ENCODE measurements at regions of chr11 and their contacts with region 1.

Region 1: DNA sequence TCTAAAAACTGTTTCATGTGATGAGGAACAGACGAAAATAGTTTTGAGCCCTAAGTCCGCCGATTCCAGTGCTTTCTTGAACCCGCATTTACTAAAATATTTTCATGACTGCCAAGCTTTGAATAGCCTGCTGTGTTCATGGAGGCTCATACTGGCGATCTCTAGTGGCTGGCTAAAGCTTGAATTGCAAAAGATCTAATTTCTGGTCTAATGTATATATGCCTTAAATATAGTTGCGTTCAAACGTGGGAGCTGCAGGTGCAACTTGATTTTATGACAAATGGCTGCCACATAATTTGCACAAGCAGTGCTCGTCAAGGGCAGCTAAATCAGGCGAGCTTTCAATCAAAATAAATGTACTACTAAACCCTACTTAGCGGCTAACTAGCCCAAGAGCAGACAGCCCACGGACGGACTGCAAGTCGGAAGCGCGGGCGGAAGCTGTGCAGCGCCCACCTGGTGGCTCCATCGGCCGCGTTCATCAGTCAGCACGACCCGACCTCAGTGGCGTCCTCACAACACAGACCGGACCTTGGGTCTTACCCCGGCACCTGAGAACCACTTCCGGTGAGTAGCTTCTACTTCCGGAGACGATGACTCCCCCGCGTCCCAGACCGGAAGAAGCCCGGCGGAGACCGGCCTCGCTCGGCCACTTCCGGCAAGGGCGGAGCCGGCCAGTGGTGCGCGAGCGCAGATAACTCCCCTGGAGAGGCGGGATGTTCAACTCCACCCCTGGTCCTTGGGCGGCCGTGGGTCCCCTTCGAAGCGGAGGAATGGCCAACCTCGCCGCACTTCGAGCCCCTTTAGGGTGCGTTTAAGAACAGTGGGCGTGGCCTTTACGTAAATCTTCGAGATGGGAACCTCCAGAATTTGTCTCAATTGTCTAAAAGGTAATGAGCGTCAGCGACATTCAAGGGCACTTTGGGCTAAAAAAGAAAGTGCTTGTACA is 6.1 kb downstream of the RPL27A start:
- DNase-seq: peak; percentile 97 to 99
- H3K4me3 ChIP-seq: peak overlapping the region; percentile 54
- H3K4me3 Mint-ChIP-seq: peak overlapping the region; percentile 67
- H3K27ac Mint-ChIP-seq: peak overlapping the region; percentile 7
- H3K4me1 ChIP-seq: peaks cover 35% of the 10 kb centered on the region
- H3K4me1 Mint-ChIP-seq: peaks cover 34% of the 10 kb centered on the region
- H3K27me3 ChIP-seq: no peaks in the 10 kb centered on the region
- H3K27me3 Mint-ChIP-seq: no peaks in the 10 kb centered on the region
- CTCF ChIP-seq: peak in 1 of 2 experiments; percentile 62

Region 2: GRCh38 chr11:8768625-8769333 is 80.1 kb after region 1 on chr11:
- CTCF ChIA-PET with region 1: interaction called, 17 read pairs
- POLR2A ChIA-PET with region 1: interaction called, 5 read pairs
- intact Hi-C with region 1: loop called (anchors 1 kb)
- DNase-seq: peak; percentile 43 to 55
- H3K4me3 ChIP-seq: no peak overlapping the region
- H3K4me3 Mint-ChIP-seq: no peak overlapping the region
- H3K27ac Mint-ChIP-seq: no peak overlapping the region
- H3K4me1 ChIP-seq: peaks cover 14% of the 10 kb centered on the region; the same call in 1 of the 2 replicates
- H3K4me1 Mint-ChIP-seq: peaks cover 12% of the 10 kb centered on the region
- H3K27me3 ChIP-seq: no peaks in the 10 kb centered on the region
- H3K27me3 Mint-ChIP-seq: no peaks in the 10 kb centered on the region
- CTCF ChIP-seq: peak in 1 of 2 experiments; percentile 60

Region 3: GRCh38 chr11:8794677-8795103 is 106.0 kb after region 1 on chr11:
- CTCF ChIA-PET with region 1: interaction called, 6 read pairs
- POLR2A ChIA-PET with region 1: no interaction called
- intact Hi-C with region 1: loop called (anchors 1 kb)
- DNase-seq: peak; percentile 86 to 89
- H3K4me3 ChIP-seq: peak overlapping the region; percentile 33
- H3K4me3 Mint-ChIP-seq: peak overlapping the region; percentile 68
- H3K27ac Mint-ChIP-seq: peak overlapping the region; percentile 83
- H3K4me1 ChIP-seq: peaks cover 31% of the 10 kb centered on the region
- H3K4me1 Mint-ChIP-seq: peaks cover 38% of the 10 kb centered on the region
- H3K27me3 ChIP-seq: no peaks in the 10 kb centered on the region
- H3K27me3 Mint-ChIP-seq: no peaks in the 10 kb centered on the region
- CTCF ChIP-seq: peak; percentile 82 to 94

Region 4: DNA sequence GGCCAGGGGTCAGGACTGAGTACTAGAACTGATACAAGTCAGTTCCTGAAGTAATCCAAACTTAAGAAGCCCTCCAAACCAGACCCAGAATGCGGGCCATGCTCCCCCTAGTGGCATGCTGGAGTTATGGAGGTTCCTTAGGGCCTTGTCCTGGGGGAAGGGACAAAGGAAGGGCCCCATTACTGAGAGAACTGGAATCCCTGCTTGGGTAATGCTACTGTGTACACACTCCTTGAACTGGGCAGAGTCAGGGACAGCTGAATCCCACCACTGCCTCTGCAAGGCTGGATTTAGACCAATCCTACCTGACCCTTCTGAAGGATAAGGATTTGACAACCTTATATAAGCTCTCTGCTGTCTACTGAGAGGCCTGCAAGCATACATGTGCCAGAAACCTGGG is 125.0 kb after region 1 on chr11:
- CTCF ChIA-PET with region 1: interaction called, 3 read pairs
- POLR2A ChIA-PET with region 1: interaction called, 6 read pairs
- intact Hi-C with region 1: loop called (anchors 1 kb)
- DNase-seq: peak; percentile 88
- H3K4me3 ChIP-seq: no peak overlapping the region
- H3K4me3 Mint-ChIP-seq: no peak overlapping the region
- H3K27ac Mint-ChIP-seq: no peak overlapping the region
- H3K4me1 ChIP-seq: peaks cover 13% of the 10 kb centered on the region
- H3K4me1 Mint-ChIP-seq: peaks cover 7% of the 10 kb centered on the region
- H3K27me3 ChIP-seq: no peaks in the 10 kb centered on the region
- H3K27me3 Mint-ChIP-seq: no peaks in the 10 kb centered on the region
- CTCF ChIP-seq: peak; percentile 88 to 91

Region 5: DNA sequence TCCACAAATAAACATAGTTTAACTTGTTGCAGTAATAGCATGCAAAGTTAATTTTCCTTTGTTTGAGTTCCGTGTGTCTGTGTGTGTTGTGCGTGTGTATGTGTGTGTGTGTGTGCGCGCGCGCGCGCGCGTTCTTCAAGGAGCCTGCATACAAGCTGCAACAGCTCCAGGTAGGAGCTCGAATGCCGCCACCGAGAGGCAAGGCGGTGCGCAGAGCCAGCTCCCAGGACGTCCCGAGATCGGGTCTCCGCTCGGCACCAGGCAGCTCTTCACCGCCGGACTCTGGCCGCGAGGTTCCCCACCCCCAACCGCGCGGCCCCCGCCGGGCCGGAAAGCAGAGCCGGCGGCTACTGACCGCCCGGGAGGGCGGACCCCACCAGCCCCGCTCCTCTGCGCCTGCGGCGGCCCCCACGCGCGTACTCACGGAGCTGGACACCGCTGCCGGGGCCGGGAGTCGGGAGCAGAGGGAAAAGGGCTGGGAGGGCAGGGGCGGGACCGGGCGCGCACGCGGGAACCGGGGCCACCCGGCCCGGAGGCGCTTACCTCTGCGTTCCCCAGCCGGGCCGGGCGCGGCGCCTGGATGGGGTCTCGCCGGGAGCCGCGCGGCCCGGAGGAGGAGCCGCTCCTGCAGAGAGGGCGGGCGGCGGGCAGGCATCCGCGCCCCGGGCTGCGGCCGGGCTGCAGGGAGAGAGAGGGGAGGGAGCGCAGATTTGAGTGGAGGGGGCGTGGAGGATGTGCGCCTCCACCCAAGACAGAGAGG is 181.9 kb after region 1 on chr11:
- CTCF ChIA-PET with region 1: interaction called, 3 read pairs
- POLR2A ChIA-PET with region 1: interaction called, 11 read pairs
- intact Hi-C with region 1: loop called (anchors 2 kb)
- DNase-seq: peak; percentile 81 to 82
- H3K4me3 ChIP-seq: peak overlapping the region; percentile 70
- H3K4me3 Mint-ChIP-seq: peak overlapping the region; percentile 84
- H3K27ac Mint-ChIP-seq: peak overlapping the region; percentile 83
- H3K4me1 ChIP-seq: peaks cover 30% of the 10 kb centered on the region
- H3K4me1 Mint-ChIP-seq: peaks cover 15% of the 10 kb centered on the region
- H3K27me3 ChIP-seq: no peaks in the 10 kb centered on the region
- H3K27me3 Mint-ChIP-seq: no peaks in the 10 kb centered on the region
- CTCF ChIP-seq: no peak

Region 6: GRCh38 chr11:8911029-8911826 is 222.5 kb after region 1 on chr11 and contains the start of gene AKIP1:
- CTCF ChIA-PET with region 1: no interaction called
- POLR2A ChIA-PET with region 1: no interaction called
- intact Hi-C with region 1: loop called (anchors 5 kb)
- DNase-seq: peak; percentile 94 to 95
- H3K4me3 ChIP-seq: peak within 1 kb of the TSS; percentile 64
- H3K4me3 Mint-ChIP-seq: peak within 1 kb of the TSS; percentile 75
- H3K27ac Mint-ChIP-seq: peak within 1 kb of the TSS; percentile 18
- H3K4me1 ChIP-seq: no peaks in the 10 kb centered on the region
- H3K4me1 Mint-ChIP-seq: peaks cover 8% of the 10 kb centered on the region
- H3K27me3 ChIP-seq: no peaks in the 10 kb centered on the region
- H3K27me3 Mint-ChIP-seq: peaks cover 7% of the 10 kb centered on the region
- CTCF ChIP-seq: no peak
- total RNA-seq, gene AKIP1: 28.7 and 32.6 TPM in 2 replicates

Region 7: GRCh38 chr11:9573052-9573774 is 884.5 kb after region 1 on chr11 and contains the start of gene WEE1:
- CTCF ChIA-PET with region 1: no interaction called
- POLR2A ChIA-PET with region 1: interaction called, 11 read pairs
- intact Hi-C with region 1: no loop called
- DNase-seq: peak; percentile 99 to 100
- H3K4me3 ChIP-seq: peak within 1 kb of the TSS; percentile 87
- H3K4me3 Mint-ChIP-seq: peak within 1 kb of the TSS; percentile 94
- H3K27ac Mint-ChIP-seq: peak within 1 kb of the TSS; percentile 100
- H3K4me1 ChIP-seq: peaks cover 40% of the 10 kb centered on the region
- H3K4me1 Mint-ChIP-seq: peaks cover 37% of the 10 kb centered on the region
- H3K27me3 ChIP-seq: no peaks in the 10 kb centered on the region
- H3K27me3 Mint-ChIP-seq: no peaks in the 10 kb centered on the region
- CTCF ChIP-seq: no peak
- total RNA-seq, gene WEE1: 108 and 116 TPM in 2 replicates